H1 (cell line): ENCODE measurements at regions of chr6 and their contacts with region 1.

Region 1: DNA sequence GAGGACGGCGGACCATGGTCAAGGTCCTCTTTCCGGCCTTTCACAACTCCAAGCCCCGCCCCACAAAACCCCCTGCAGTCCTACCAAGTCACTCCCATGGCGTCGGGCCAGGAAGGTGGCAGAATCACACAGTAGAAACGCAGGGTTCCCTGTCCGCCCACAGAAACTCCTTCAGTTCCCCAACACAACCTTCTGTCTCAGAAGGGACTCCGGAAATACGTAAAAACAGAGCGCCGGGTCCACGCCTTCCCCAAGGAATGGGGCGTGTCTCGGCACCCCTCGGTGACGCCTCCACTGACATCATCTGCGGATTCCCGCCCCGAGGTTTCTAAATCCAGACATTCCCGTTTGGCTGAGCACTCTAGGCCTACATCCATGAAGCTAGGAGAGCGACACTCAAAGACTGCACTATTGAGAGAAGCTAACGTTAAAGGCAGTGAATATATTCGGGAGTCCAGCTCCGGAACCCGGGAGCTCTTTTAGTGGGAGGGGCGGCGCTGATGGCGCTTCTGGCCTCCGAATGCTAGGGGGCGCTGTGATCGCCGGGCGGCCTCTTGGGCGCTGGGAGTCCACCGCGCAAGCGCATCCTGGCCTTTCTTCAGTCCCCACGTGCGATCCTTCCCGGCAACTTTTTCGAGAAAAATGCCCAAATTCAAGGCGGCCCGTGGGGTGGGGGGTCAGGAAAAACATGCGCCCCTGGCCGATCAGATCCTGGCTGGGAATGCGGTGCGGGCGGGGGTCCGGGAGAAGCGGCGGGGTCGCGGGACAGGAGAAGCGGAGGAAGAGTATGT is at the starts of genes BYSL and MED20:
- DNase-seq: peak; percentile 75 to 97
- H3K4me3 ChIP-seq: peak within 1 kb of the TSS; percentile 79 to 98 (median 87)
- H3K27ac ChIP-seq: peak within 1 kb of the TSS; percentile 98
- H3K4me1 ChIP-seq: peaks cover 1 to 11% (median 4%) of the 10 kb centered on the region in 4 experiments; a peak in 3 of 7 replicates
- H3K27me3 ChIP-seq: no peaks in the 10 kb centered on the region
- CTCF ChIP-seq: peak; percentile 78 to 88 (median 83)
- EP300 ChIP-seq: no peak
- POLR2A ChIP-seq: peak; percentile 64 to 80; a peak in 2 of 3 replicates
- RAD21 ChIP-seq: peak; percentile 4 to 33; a peak in 3 of 4 replicates
- total RNA-seq, gene BYSL: 43.9 and 49.2 TPM in 2 replicates
- total RNA-seq, gene MED20: 38.7 and 42.9 TPM in 2 replicates

Region 2: DNA sequence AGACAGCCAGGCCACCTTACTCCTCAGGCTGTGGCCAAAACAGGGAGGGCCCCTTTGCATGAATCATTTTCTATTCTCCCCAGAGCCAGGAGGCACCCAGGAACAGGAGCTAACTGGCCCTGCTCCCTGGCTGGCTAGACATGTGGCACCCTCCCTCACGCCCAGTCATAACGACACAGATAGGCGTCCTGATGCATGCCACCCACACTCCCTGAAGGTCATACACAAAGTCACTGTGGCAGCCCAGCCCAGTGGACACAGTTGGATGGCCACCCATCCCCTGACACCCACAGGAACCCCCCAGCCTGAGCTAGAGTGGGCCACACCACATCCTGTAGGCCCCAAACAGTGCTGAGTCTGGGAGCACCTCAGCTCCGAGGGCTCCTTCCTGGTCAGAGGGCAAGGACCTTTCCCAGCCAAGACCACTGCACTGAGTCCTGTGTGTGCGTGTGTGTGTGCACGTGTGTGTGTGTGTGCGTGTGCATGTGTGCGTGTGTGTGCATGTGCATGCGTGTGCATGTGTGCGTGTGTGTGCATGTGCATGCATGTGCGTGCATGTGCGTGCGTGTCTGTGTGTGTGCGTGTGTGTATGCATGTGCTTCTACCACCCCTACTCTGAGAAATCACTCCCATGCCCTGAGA is 207.3 kb before region 1 on chr6:
- CTCF ChIA-PET with region 1: no interaction called
- POLR2A ChIA-PET with region 1: no interaction called
- DNase-seq: no peak
- H3K4me3 ChIP-seq: no peak overlapping the region
- H3K27ac ChIP-seq: no peak overlapping the region
- H3K4me1 ChIP-seq: peaks cover 0 to 3% (median 0%) of the 10 kb centered on the region in 4 experiments; a peak in 1 of 7 replicates
- H3K27me3 ChIP-seq: no peaks in the 10 kb centered on the region; a peak in 1 of 7 replicates
- CTCF ChIP-seq: no peak
- EP300 ChIP-seq: no peak
- POLR2A ChIP-seq: no peak
- RAD21 ChIP-seq: no peak

Region 3: DNA sequence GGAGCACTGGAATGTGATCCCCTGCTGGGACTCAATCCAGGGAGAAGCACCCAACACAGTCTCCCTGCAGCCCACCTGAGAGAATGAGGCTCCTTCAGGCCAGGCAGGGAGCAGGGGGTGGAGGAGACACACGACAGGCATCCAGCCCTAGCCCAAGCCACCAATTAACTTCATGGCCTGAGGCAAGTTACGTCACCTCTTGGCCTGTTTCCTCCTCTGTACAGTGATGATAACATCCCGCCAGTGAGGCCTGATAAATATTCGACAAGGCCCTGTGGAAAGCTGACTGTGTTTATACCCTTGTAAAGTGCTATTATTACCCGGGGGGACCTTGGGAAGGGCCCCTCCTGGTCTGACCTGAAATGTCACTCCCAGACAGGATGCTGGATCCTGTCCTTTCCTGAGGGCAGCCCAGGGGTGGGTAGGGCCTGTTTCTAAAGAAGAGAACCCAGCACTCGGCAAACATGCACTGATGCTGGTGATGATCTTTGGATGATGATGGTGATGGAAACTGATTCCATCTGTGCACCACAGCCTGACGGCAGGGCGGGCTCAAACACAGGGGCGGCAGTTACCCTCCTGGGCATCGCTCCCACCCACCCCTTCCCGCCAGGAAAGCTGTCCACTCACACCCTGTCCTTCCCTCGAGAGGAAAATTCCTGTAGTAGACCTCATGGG is 153.8 kb before region 1 on chr6:
- CTCF ChIA-PET with region 1: no interaction called
- POLR2A ChIA-PET with region 1: no interaction called
- DNase-seq: no peak
- H3K4me3 ChIP-seq: no peak overlapping the region
- H3K27ac ChIP-seq: no peak overlapping the region; the same call in 1 of the 2 replicates
- H3K4me1 ChIP-seq: no peaks in the 10 kb centered on the region; a peak in 1 of 7 replicates
- H3K27me3 ChIP-seq: no peaks in the 10 kb centered on the region
- CTCF ChIP-seq: no peak
- EP300 ChIP-seq: no peak
- POLR2A ChIP-seq: no peak
- RAD21 ChIP-seq: no peak

Region 4: GRCh38 chr6:41895300-41896233 is 25.5 kb before region 1 on chr6 and contains the start of gene USP49:
- CTCF ChIA-PET with region 1: interaction called, 13 read pairs
- POLR2A ChIA-PET with region 1: interaction called, 39 read pairs
- DNase-seq: peak; percentile 59 to 97
- H3K4me3 ChIP-seq: peak within 1 kb of the TSS; percentile 80 to 95 (median 86)
- H3K27ac ChIP-seq: peak within 1 kb of the TSS; percentile 83
- H3K4me1 ChIP-seq: peaks cover 0 to 11% (median 4%) of the 10 kb centered on the region in 4 experiments; a peak in 4 of 7 replicates
- H3K27me3 ChIP-seq: no peaks in the 10 kb centered on the region
- CTCF ChIP-seq: no peak
- EP300 ChIP-seq: 0 out of 3 replicates have a peak, but pooled peaks of 1 of the 2 experiments have one; percentile 4
- POLR2A ChIP-seq: peak; percentile 20 to 71
- RAD21 ChIP-seq: no peak
- total RNA-seq, gene USP49: 21.1 and 24.4 TPM in 2 replicates

Region 5: GRCh38 chr6:41901882-41902519 is 19.1 kb before region 1 on chr6:
- CTCF ChIA-PET with region 1: interaction called, 13 read pairs
- POLR2A ChIA-PET with region 1: interaction called, 39 read pairs
- DNase-seq: peak in 1 of 2 experiments; percentile 53
- H3K4me3 ChIP-seq: no peak overlapping the region
- H3K27ac ChIP-seq: no peak overlapping the region
- H3K4me1 ChIP-seq: no peaks in the 10 kb centered on the region
- H3K27me3 ChIP-seq: no peaks in the 10 kb centered on the region
- CTCF ChIP-seq: peak; percentile 25 to 56 (median 44)
- EP300 ChIP-seq: no peak
- POLR2A ChIP-seq: no peak
- RAD21 ChIP-seq: peak; percentile 49 to 65

Region 6: DNA sequence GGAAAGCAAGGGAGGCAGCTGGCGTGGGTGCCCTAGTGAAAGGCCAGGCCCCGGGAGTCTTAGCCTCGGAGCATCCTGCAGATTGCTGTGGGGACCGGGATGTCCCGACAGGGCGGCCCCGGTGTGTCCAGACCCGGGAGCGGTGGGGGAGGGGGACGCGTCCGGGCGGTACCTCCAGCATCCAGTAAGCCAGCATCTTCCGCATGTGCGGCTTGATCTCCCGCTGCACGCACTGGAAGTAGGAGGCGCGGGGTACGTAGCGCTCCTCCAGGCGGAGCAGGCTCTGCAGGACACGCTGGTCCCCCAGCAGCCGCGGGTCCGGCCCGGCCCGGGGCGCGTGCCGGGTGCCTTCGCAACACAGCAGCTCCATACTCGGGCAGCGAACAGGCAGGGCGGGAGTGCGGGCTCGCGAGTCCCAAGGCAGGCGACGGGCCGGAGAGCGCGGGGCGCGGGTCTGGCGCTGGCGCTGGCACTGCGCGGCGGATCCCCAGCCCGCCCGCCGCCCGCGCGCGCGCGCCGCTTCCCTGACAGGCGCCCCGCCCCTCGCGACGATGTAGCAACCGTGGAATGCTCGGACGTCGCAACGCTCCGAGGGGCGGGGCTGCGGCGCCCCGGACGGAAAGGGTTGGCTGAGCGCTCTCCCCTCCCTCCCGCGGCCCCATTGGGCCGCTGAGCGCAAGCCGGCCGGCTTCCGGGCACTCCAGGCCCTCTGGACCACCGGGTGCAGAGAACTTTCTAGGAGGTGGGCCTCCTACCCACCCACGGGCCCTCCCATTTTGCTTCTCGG is 20.4 kb after region 1 on chr6 and contains the start of gene CCND3:
- CTCF ChIA-PET with region 1: interaction called, 166 read pairs
- POLR2A ChIA-PET with region 1: interaction called, 235 read pairs
- DNase-seq: peak in 1 of 2 experiments; percentile 83
- H3K4me3 ChIP-seq: peak within 1 kb of the TSS; percentile 69 to 91 (median 84)
- H3K27ac ChIP-seq: no peak within 1 kb of the TSS
- H3K4me1 ChIP-seq: peaks cover 6 to 28% (median 23%) of the 10 kb centered on the region in 4 experiments
- H3K27me3 ChIP-seq: no peaks in the 10 kb centered on the region
- CTCF ChIP-seq: no peak
- EP300 ChIP-seq: no peak
- POLR2A ChIP-seq: no peak
- RAD21 ChIP-seq: 0 out of 4 replicates have a peak, but pooled peaks of 1 of the 2 experiments have one; percentile 6
- total RNA-seq, gene CCND3: 28.4 and 32.9 TPM in 2 replicates

Region 7: GRCh38 chr6:41966961-41967311 is 45.8 kb after region 1 on chr6:
- CTCF ChIA-PET with region 1: interaction called, 8 read pairs
- POLR2A ChIA-PET with region 1: interaction called, 11 read pairs
- DNase-seq: no peak
- H3K4me3 ChIP-seq: no peak overlapping the region; a peak in 1 of 8 replicates
- H3K27ac ChIP-seq: no peak overlapping the region
- H3K4me1 ChIP-seq: peaks cover 15 to 28% (median 23%) of the 10 kb centered on the region in 4 experiments
- H3K27me3 ChIP-seq: no peaks in the 10 kb centered on the region; a peak in 1 of 7 replicates
- CTCF ChIP-seq: no peak
- EP300 ChIP-seq: no peak
- POLR2A ChIP-seq: no peak
- RAD21 ChIP-seq: no peak

Region 8: DNA sequence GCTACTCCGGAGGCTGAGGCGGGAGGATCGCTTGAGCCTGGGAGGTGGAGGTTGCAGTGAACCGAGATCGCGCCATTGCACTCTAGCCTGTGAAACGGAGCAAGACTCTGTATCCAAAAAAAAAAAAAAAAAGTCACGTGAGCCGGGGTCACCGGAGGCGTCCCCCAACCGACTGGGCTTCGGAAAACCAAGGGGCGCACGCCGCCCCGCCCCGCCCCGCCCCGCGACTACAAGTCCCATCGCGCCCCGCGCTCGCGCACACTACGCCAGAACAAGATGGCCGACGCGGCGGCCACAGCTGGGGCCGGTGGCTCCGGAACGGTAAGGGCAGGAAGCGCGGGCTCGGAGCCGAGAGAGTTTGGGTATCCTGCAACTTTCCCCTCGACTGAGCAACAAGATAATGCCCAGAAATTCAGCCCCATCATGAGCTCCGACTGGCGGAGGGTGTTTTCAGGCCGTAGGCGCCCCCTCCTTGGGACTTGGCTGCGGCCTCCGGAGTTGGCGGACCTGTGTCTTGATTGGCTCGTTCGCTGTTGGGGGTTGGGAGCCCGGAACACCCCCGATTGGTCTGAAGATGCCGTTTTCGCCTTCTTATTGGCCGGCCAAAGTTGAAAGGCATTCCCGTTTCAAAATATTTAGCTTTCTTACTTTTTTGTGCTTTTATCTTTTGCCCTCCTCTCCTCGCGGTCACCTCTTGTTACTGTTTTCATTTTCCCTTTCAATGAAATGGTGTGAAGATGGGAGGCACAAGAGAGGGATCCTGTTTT is 129.3 kb after region 1 on chr6 and contains the start of gene TAF8:
- CTCF ChIA-PET with region 1: interaction called, 50 read pairs
- POLR2A ChIA-PET with region 1: interaction called, 38 read pairs
- DNase-seq: peak; percentile 79 to 91
- H3K4me3 ChIP-seq: peak within 1 kb of the TSS; percentile 85 to 99 (median 90)
- H3K27ac ChIP-seq: peak within 1 kb of the TSS; percentile 95
- H3K4me1 ChIP-seq: peaks cover 13 to 16% (median 14%) of the 10 kb centered on the region in 4 experiments
- H3K27me3 ChIP-seq: peaks cover 38 to 45% (median 42%) of the 10 kb centered on the region in 4 experiments
- CTCF ChIP-seq: no peak; a peak in 1 of 4 replicates
- EP300 ChIP-seq: no peak
- POLR2A ChIP-seq: peak in 1 of 2 experiments; percentile 100; a peak in 2 of 3 replicates
- RAD21 ChIP-seq: 0 out of 4 replicates have a peak, but pooled peaks of 1 of the 2 experiments have one; percentile 4
- total RNA-seq, gene TAF8: 32.7 and 34.0 TPM in 2 replicates